PC-3 (cell line): ENCODE measurements at regions of chr13 and their contacts with region 1.

Region 1: DNA sequence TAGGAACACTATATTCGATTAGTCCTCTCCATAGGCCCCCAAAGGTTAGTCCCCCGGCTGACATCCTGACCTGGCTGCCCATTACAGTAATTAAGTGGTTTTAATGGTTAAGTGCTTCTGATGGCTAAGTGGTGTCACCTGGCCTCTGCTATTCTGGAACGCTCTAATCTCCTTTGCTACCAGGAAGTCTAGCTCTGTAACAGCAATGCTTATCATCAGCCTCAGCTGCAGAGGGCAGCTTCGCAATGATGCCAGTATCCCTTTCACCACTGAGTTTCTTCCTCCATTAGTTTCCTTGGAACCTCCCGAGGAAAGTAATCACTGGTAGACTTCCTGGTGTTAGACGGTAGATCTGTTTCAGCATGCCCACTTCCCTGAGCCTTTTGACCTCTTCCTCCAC is 8.6 kb upstream of the RNF6 start:
- DNase-seq: no peak
- ATAC-seq: no peak
- H3K4me3 ChIP-seq: no peak overlapping the region
- H3K27ac ChIP-seq: no peak overlapping the region
- H3K4me1 ChIP-seq: no peaks in the 10 kb centered on the region
- H3K27me3 ChIP-seq: peaks cover 3% of the 10 kb centered on the region
- CTCF ChIP-seq: no peak

Region 2: DNA sequence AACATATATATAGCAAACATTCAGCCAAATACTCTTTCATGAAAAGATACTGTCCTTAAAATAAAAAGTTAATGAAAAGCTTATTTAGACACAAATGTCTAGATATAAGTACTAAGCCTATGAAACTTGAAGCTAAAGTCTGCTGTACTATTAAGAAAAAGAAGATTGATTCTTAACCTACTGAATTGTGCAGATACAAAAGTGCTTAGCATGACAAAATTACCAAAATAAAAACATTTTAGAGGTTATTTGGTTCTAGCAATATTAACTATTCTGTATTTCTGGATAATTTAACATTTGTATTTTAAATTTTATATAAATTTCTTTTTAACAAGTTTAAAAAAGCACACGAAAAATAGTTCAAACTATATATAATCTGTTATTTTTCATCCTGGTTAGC is 17.4 kb before region 1 on chr13:
- CTCF ChIA-PET with region 1: no interaction called
- POLR2A ChIA-PET with region 1: interaction called, 17 read pairs
- intact Hi-C with region 1: no loop called
- DNase-seq: no peak
- ATAC-seq: no peak
- H3K4me3 ChIP-seq: no peak overlapping the region
- H3K27ac ChIP-seq: no peak overlapping the region
- H3K4me1 ChIP-seq: no peaks in the 10 kb centered on the region
- H3K27me3 ChIP-seq: no peaks in the 10 kb centered on the region
- CTCF ChIP-seq: no peak